Endothelial cell of umbilical vein (primary cell): ENCODE measurements at regions of chr20 and their contacts with region 1.

Region 1: GRCh38 chr20:49245921-49246740 is 26.9 kb downstream of the DDX27 start:
- DNase-seq: peak; percentile 72
- H3K4me3 ChIP-seq: no peak overlapping the region
- H3K27ac ChIP-seq: no peak overlapping the region
- H3K4me1 ChIP-seq: peaks cover 26% of the 10 kb centered on the region
- H3K27me3 ChIP-seq: no peaks in the 10 kb centered on the region
- CTCF ChIP-seq: peak; percentile 68
- POLR2A ChIP-seq: no peak

Region 2: GRCh38 chr20:49078296-49078695 is 167.8 kb before region 1 on chr20:
- CTCF ChIA-PET with region 1: no interaction called
- POLR2A ChIA-PET with region 1: no interaction called
- dilution Hi-C with region 1: no loop called
- intact Hi-C with region 1: no loop called
- DNase-seq: no peak
- H3K4me3 ChIP-seq: no peak overlapping the region
- H3K27ac ChIP-seq: no peak overlapping the region
- H3K4me1 ChIP-seq: no peaks in the 10 kb centered on the region
- H3K27me3 ChIP-seq: no peaks in the 10 kb centered on the region
- CTCF ChIP-seq: no peak
- POLR2A ChIP-seq: no peak

Region 3: DNA sequence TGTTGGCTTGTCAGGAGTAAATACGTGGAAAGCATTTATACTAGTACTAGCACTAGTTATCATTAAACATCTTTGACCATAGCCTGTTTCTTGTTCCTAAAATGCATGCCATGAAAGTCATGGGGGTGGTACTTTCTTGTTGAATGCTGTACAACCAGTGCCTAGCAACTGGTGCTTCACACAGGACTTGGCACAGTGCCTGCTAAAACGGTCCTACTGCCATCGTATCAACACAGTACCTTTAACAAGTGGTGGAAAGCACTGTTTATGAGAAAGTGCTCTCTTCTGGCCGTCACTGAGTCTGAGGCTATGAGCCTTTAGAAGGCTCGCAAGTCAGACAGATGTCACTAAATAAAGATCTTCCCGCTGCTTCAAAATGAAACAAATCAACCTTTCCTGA is 10.1 kb after region 1 on chr20:
- CTCF ChIA-PET with region 1: interaction called, 27 read pairs
- POLR2A ChIA-PET with region 1: no interaction called
- dilution Hi-C with region 1: no loop called
- intact Hi-C with region 1: no loop called
- DNase-seq: no peak
- H3K4me3 ChIP-seq: no peak overlapping the region
- H3K27ac ChIP-seq: no peak overlapping the region
- H3K4me1 ChIP-seq: peaks cover 8% of the 10 kb centered on the region
- H3K27me3 ChIP-seq: no peaks in the 10 kb centered on the region
- CTCF ChIP-seq: no peak
- POLR2A ChIP-seq: no peak

Region 4: GRCh38 chr20:49268600-49269365 is 22.7 kb after region 1 on chr20:
- CTCF ChIA-PET with region 1: interaction called, 11 read pairs
- POLR2A ChIA-PET with region 1: no interaction called
- dilution Hi-C with region 1: no loop called
- intact Hi-C with region 1: no loop called
- DNase-seq: no peak
- H3K4me3 ChIP-seq: peak overlapping the region in 1 of 3 experiments; percentile 33
- H3K27ac ChIP-seq: no peak overlapping the region
- H3K4me1 ChIP-seq: peaks cover 21% of the 10 kb centered on the region
- H3K27me3 ChIP-seq: no peaks in the 10 kb centered on the region
- CTCF ChIP-seq: no peak
- POLR2A ChIP-seq: no peak

Region 5: GRCh38 chr20:49278036-49278817 is 32.1 kb after region 1 on chr20 and contains the start of gene ZNFX1:
- CTCF ChIA-PET with region 1: interaction called, 16 read pairs
- POLR2A ChIA-PET with region 1: interaction called, 3 read pairs
- dilution Hi-C with region 1: no loop called
- intact Hi-C with region 1: loop called (anchors 1 kb)
- DNase-seq: peak; percentile 98
- H3K4me3 ChIP-seq: peak within 1 kb of the TSS; percentile 83 to 97 (median 95)
- H3K27ac ChIP-seq: peak within 1 kb of the TSS; percentile 73
- H3K4me1 ChIP-seq: peaks cover 43% of the 10 kb centered on the region
- H3K27me3 ChIP-seq: no peaks in the 10 kb centered on the region
- CTCF ChIP-seq: no peak
- POLR2A ChIP-seq: peak; percentile 100
- total RNA-seq, gene ZNFX1: 26.5 and 27.9 TPM in 2 replicates

Region 6: GRCh38 chr20:49323622-49324238 is 77.6 kb after region 1 on chr20:
- CTCF ChIA-PET with region 1: interaction called, 121 read pairs
- POLR2A ChIA-PET with region 1: no interaction called
- dilution Hi-C with region 1: no loop called
- intact Hi-C with region 1: loop called (anchors 1 kb)
- DNase-seq: peak; percentile 89
- H3K4me3 ChIP-seq: no peak overlapping the region
- H3K27ac ChIP-seq: peak overlapping the region; percentile 19
- H3K4me1 ChIP-seq: peaks cover 12% of the 10 kb centered on the region
- H3K27me3 ChIP-seq: peaks cover 31 to 33% of the 10 kb centered on the region in 2 experiments
- CTCF ChIP-seq: peak; percentile 12 to 30
- POLR2A ChIP-seq: no peak